WTC11 (cell line): ENCODE measurements at regions of chr3 and their contacts with region 1.

Region 1: DNA sequence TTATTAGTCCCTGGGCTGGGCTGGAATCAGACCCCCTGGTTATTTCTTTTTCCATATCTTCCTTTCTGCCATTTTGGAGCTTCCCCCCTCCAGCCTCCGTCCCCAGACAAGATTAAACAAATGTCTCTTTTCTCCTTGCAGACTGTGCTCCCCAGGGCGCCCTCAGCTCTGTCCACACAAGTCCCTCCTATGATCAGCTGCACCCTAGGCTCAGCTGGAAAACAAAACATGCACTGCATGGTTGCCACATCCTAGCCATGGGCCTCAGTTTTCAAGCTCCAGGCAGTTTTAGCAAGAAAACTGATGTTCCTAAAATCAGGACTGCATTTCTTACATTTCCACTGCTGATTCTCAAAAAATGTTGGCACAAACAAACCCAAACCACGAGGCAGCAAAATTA is 23.5 kb upstream of the RFTN1 start:
- DNase-seq: no peak
- ATAC-seq: no peak
- H3K4me3 Mint-ChIP-seq: no peak overlapping the region
- H3K27ac Mint-ChIP-seq: peak overlapping the region; percentile 81
- H3K4me1 Mint-ChIP-seq: peaks cover 41% of the 10 kb centered on the region
- H3K27me3 Mint-ChIP-seq: no peaks in the 10 kb centered on the region
- CTCF ChIP-seq: no peak

Region 2: GRCh38 chr3:16504242-16504641 is 32.8 kb before region 1 on chr3:
- CTCF ChIA-PET with region 1: no interaction called
- POLR2A ChIA-PET with region 1: no interaction called
- DNase-seq: no peak
- ATAC-seq: no peak
- H3K4me3 Mint-ChIP-seq: no peak overlapping the region
- H3K27ac Mint-ChIP-seq: no peak overlapping the region
- H3K4me1 Mint-ChIP-seq: peaks cover 14% of the 10 kb centered on the region
- H3K27me3 Mint-ChIP-seq: peaks cover 9% of the 10 kb centered on the region
- CTCF ChIP-seq: no peak

Region 3: GRCh38 chr3:16516695-16517481 is 20.1 kb before region 1 on chr3:
- CTCF ChIA-PET with region 1: interaction called, 11 read pairs
- POLR2A ChIA-PET with region 1: no interaction called
- DNase-seq: no peak
- ATAC-seq: peak; percentile 38
- H3K4me3 Mint-ChIP-seq: no peak overlapping the region
- H3K27ac Mint-ChIP-seq: no peak overlapping the region
- H3K4me1 Mint-ChIP-seq: peaks cover 28% of the 10 kb centered on the region
- H3K27me3 Mint-ChIP-seq: peaks cover 38% of the 10 kb centered on the region
- CTCF ChIP-seq: no peak

Region 4: DNA sequence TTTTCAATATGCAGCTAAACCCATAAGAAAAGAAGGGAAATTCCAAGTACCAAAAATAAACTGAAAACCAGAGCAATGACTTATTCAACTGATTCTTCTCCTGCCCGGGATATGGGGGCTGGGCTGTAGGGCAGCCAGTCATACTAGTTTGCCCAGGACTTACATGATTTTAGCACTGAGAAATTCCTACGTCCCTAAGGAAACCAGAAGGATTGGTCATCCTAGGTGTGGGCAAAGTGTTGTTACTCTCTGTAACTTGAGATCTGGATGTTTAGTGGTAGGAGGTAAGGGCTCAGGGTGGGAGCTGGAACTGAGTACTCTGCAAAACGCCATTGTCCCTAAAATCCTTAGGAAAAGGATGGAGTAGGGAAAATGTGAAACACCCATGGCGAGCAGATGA is 69.4 kb after region 1 on chr3:
- CTCF ChIA-PET with region 1: no interaction called
- POLR2A ChIA-PET with region 1: no interaction called
- DNase-seq: no peak
- ATAC-seq: peak; percentile 51
- H3K4me3 Mint-ChIP-seq: no peak overlapping the region
- H3K27ac Mint-ChIP-seq: peak overlapping the region; percentile 42
- H3K4me1 Mint-ChIP-seq: peaks cover 65% of the 10 kb centered on the region
- H3K27me3 Mint-ChIP-seq: no peaks in the 10 kb centered on the region
- CTCF ChIP-seq: no peak